Spleen (tissue), 13 donors: ENCODE measurements at regions of chr2 and their contacts with region 1.

Region 1: GRCh38 chr2:236569573-236569973 is at the start of gene ACKR3:
- DNase-seq: peak; percentile 92
- H3K4me3 ChIP-seq: peak within 1 kb of the TSS; percentile 40 to 69 (median 45)
- H3K27ac ChIP-seq: peak within 1 kb of the TSS; percentile 53 to 85 (median 81)
- H3K4me1 ChIP-seq: peaks cover 9 to 68% (median 40%) of the 10 kb centered on the region in 6 donors
- H3K27me3 ChIP-seq: peaks cover 0 to 20% (median 0%) of the 10 kb centered on the region in 7 donors
- CTCF ChIP-seq: peak; percentile 25 to 89 (median 60)
- POLR2A ChIP-seq: no peak
- total RNA-seq, gene ACKR3: 46.9 to 164 (median 86.8) TPM

Region 2: DNA sequence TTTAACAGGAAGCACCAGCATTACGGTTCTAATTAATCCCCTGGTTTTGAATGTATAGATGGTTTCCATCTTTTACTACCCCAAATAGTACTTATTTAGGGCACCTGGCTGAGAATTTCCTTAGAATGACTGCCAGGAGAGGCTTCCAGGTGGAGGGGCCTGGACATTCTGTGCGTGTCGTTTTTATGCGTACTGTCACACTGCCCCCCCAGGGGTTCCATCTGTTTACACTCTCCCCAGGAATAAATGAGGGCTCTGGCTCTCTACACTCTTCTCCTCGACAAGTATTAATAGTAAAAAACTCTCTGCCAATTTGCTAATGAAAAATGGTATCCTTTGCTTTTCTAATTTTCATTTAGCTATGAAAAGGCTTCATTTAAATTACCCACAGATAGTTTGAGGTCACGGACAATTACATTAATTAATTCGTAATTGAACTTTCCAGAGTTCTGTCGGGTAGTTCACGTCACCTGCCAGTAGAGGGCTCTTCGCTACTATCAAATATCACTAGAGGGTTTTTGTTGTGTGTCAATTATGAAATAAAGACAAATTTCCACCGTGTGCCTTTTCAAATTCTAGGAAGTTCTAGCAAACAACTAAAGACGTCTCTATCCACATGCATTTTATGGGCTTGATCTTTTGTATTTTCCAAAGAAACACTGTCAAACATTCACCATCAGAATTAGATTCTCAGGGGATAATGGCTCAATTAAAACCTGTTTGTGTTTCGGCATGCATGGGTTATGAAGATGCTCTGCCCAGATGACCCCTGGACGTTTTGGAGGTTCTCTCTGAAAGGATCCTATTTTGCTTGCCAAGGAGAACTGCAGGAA is 216.6 kb before region 1 on chr2:
- intact Hi-C with region 1: loop called (anchors 5 kb)
- DNase-seq: no peak
- H3K4me3 ChIP-seq: no peak overlapping the region
- H3K27ac ChIP-seq: no peak overlapping the region
- H3K4me1 ChIP-seq: peaks cover 0 to 9% (median 7%) of the 10 kb centered on the region in 6 donors
- H3K27me3 ChIP-seq: peaks cover 0 to 34% (median 0%) of the 10 kb centered on the region in 7 donors
- CTCF ChIP-seq: peak; percentile 56 to 84 (median 77)
- POLR2A ChIP-seq: no peak

Region 3: DNA sequence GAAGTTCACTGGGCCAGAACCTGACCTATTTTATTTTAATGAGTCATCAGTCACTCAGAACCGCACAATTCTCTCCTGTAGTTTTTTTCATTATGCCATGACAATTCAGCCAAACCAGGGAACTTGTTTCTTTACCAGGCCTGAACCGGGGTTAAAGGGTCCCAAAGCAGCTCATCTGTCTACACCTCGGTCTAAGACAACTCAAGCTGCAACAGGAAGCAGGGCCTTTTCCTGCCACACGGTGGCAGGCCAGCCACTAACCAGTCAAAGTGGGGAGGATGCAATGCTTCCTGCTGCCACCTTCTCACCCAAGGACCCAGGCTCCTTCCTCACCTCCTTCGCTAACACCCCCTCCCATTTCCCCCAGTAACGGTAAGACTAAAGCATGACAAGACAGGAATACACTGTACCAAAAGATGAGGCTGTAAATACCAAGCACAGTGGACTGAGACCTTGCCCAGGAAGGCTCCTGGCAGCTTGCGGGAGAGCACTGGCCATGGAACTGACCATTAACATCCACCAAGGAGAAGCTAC is 56.6 kb before region 1 on chr2:
- intact Hi-C with region 1: loop called (anchors 5 kb)
- DNase-seq: peak; percentile 89
- H3K4me3 ChIP-seq: no peak overlapping the region
- H3K27ac ChIP-seq: peak overlapping the region in 5 of 8 donors; percentile 17 to 68 (median 29)
- H3K4me1 ChIP-seq: peaks cover 15 to 31% (median 20%) of the 10 kb centered on the region in 6 donors
- H3K27me3 ChIP-seq: peaks cover 0 to 7% (median under 1%) of the 10 kb centered on the region in 7 donors
- CTCF ChIP-seq: peak; percentile 77 to 91 (median 89)
- POLR2A ChIP-seq: no peak

Region 4: DNA sequence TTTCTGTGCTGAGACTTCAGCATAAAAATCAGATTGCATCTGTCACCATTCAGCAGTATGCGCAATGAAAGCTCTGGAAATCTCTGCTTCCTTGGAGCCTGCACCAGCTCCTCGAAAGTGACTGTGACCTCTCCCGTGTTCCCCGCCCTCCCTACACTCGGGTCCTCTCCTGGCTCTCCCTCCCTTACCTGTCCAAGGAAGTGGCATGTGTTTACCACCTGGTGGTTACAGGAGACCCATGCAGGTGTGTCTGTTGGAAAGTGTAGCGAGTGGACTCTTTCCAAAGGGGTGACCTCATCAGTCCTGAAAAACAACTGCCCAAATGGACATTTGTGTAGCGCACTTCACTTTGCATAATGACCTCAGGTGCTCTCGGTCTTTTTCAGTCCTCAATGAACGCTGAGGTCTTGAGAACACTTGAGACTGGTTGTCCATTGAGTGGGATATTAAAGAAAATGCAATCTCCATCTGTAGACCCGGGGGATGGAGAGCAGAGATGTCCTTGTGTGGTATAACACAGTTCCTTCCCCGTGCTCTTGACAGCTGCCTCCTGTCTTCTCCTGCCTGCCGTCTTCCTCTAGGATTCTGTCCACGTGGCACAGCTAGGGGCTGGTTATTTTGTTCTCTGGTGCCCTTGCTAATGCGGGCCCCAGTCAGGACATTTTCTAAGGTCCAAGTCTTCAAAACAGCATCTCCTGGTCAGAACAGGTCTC is 133.2 kb after region 1 on chr2:
- intact Hi-C with region 1: no loop called
- DNase-seq: no peak
- H3K4me3 ChIP-seq: no peak overlapping the region
- H3K27ac ChIP-seq: no peak overlapping the region
- H3K4me1 ChIP-seq: no peaks in the 10 kb centered on the region
- H3K27me3 ChIP-seq: no peaks in the 10 kb centered on the region
- CTCF ChIP-seq: no peak
- POLR2A ChIP-seq: no peak